ENCODE measurements at regions of chr11 and their contacts with region 1.

Region 1: GRCh38 chr11:57324886-57325734 is at the start of gene TNKS1BP1:
- DNase-seq: peak; percentile 95
- H3K4me3 Mint-ChIP-seq: peak within 1 kb of the TSS; percentile 82
- H3K27ac Mint-ChIP-seq: peak within 1 kb of the TSS; percentile 94
- H3K4me1 Mint-ChIP-seq: peaks cover 56% of the 10 kb centered on the region
- H3K27me3 Mint-ChIP-seq: no peaks in the 10 kb centered on the region
- total RNA-seq, gene TNKS1BP1: 14.1 to 14.7 TPM

Region 2: GRCh38 chr11:57311109-57311936 is 13.8 kb before region 1 on chr11:
- CTCF ChIA-PET with region 1: interaction called, 4 read pairs
- intact Hi-C with region 1: loop called (anchors 1 kb)
- DNase-seq: peak; percentile 89
- H3K4me3 Mint-ChIP-seq: no peak overlapping the region
- H3K27ac Mint-ChIP-seq: no peak overlapping the region
- H3K4me1 Mint-ChIP-seq: peaks cover 17% of the 10 kb centered on the region
- H3K27me3 Mint-ChIP-seq: no peaks in the 10 kb centered on the region

Measured in activated naive CD4-positive, alpha-beta T cell treated with anti-CD3 and anti-CD28 coated beads for 36 hours (primary cell).